ENCODE measurements at regions of chr10 and their contacts with region 1.

Region 1: DNA sequence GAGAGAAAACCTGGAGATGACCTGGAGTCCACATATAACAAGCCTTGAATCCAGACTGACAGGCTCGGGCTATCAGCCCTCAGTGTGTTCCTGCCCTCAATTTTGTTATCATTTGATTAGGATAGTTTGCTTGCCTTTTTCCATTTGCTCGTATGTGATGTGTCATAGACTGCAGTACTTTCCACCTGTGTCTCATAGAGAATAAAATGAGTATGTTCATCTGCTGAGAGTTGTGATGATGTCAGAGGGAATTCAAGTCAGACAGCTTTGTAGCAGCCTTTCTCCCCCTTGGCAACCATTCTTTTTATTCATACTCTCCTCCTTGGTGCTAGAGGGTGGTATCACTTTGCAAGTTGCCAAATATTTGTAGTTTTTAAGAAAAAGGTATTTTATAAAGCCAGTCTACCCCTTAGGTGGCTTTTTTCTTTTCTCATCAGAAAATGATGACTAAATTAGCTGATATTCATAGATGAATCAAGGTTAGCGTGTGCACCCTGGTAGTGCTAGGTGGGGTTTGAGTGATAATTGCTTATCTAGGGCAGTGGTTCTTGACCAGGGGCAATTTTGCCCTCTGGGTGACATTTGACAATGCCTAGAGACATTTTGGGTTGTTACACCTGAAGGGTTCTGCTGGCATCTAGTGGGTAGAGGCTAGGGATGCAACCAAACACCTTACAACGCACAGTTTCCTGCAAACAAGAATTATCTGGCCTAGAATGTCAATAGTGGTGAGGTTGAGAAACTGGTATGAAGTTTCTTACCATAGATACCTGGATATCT is 5.4 kb downstream of the SGPL1 start:
- DNase-seq: peak; percentile 41
- H3K4me3 Mint-ChIP-seq: no peak overlapping the region
- H3K27ac Mint-ChIP-seq: peak overlapping the region; percentile 61
- H3K4me1 Mint-ChIP-seq: peaks cover 51% of the 10 kb centered on the region
- H3K27me3 Mint-ChIP-seq: no peaks in the 10 kb centered on the region

Region 2: GRCh38 chr10:70169649-70170364 is 651.4 kb before region 1 on chr10:
- CTCF ChIA-PET with region 1: no interaction called
- intact Hi-C with region 1: loop called (anchors 10 kb)
- DNase-seq: no peak
- H3K4me3 Mint-ChIP-seq: peak overlapping the region; percentile 87
- H3K27ac Mint-ChIP-seq: peak overlapping the region; percentile 90
- H3K4me1 Mint-ChIP-seq: peaks cover 66% of the 10 kb centered on the region
- H3K27me3 Mint-ChIP-seq: no peaks in the 10 kb centered on the region

Region 3: GRCh38 chr10:70832852-70833528 is 11.8 kb after region 1 on chr10:
- CTCF ChIA-PET with region 1: interaction called, 4 read pairs
- intact Hi-C with region 1: loop called (anchors 1 kb)
- DNase-seq: peak; percentile 20
- H3K4me3 Mint-ChIP-seq: no peak overlapping the region
- H3K27ac Mint-ChIP-seq: peak overlapping the region; percentile 57
- H3K4me1 Mint-ChIP-seq: peaks cover 45% of the 10 kb centered on the region
- H3K27me3 Mint-ChIP-seq: no peaks in the 10 kb centered on the region

Measured in activated naive CD4-positive, alpha-beta T cell treated with anti-CD3 and anti-CD28 coated beads for 36 hours (primary cell).